Transverse colon (tissue), 4 donors: ENCODE measurements at regions of chr17 and their contacts with region 1.

Region 1: GRCh38 chr17:72556944-72557826 is 436.4 kb downstream of the SOX9 start:
- DNase-seq: peak; percentile 75
- H3K4me3 ChIP-seq: no peak overlapping the region
- H3K27ac ChIP-seq: no peak overlapping the region
- H3K4me1 ChIP-seq: peaks cover 0 to 17% (median 8%) of the 10 kb centered on the region in 4 donors
- H3K27me3 ChIP-seq: no peaks in the 10 kb centered on the region
- CTCF ChIP-seq: peak; percentile 68 to 82 (median 71)
- EP300 ChIP-seq: no peak
- POLR2A ChIP-seq: no peak

Region 2: GRCh38 chr17:72725433-72726068 is 168.4 kb after region 1 on chr17:
- in situ Hi-C with region 1: loop called in 1 of 4 experiments (anchors 10 kb)
- intact Hi-C with region 1: no loop called
- DNase-seq: peak; percentile 69
- H3K4me3 ChIP-seq: no peak overlapping the region
- H3K27ac ChIP-seq: no peak overlapping the region
- H3K4me1 ChIP-seq: peaks cover 0 to 9% (median 3%) of the 10 kb centered on the region in 4 donors
- H3K27me3 ChIP-seq: no peaks in the 10 kb centered on the region
- CTCF ChIP-seq: peak; percentile 67 to 89 (median 80)
- EP300 ChIP-seq: no peak
- POLR2A ChIP-seq: no peak

Region 3: DNA sequence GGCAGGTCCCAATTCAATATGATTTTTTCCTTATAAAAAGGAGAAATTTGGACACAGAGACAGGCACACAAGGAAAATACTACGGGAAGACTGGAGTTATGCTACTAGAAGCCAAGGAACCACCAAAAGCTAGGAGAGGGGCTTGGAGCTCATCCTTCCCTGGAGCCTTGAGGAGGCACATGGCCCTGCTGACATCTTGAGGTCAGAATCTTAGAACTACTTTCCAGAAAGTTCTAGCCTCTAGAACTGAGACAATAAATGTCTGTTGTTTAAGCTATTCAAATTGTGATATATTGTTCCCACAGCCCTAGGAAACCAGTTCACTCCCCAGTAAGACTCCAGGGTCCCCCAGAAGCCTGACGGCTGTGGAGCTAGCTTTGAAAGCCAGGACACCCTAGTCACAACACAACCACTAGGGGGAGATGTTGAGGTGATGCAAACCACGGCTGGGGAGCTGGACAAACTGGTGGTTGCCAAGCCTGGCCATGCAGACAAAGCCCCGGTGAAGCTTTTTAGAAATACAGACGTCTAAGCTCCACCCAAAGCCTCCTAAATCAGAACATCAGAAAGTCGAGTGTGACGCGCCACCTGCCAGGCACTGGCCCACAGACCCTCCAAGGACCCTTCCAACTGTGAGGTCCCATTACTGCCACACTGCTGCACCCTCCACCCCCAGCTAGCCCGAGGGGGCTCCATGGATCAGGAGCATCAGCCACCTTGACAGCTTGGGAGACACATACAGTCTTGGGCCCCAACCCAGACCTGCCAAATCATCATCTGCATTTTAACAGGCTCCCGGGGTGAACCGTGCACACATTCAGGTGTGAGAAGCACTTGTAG is 428.9 kb after region 1 on chr17:
- in situ Hi-C with region 1: loop called in 1 of 4 experiments (anchors 25 kb)
- intact Hi-C with region 1: no loop called
- DNase-seq: peak; percentile 57
- H3K4me3 ChIP-seq: no peak overlapping the region
- H3K27ac ChIP-seq: no peak overlapping the region
- H3K4me1 ChIP-seq: no peaks in the 10 kb centered on the region
- H3K27me3 ChIP-seq: no peaks in the 10 kb centered on the region
- CTCF ChIP-seq: peak; percentile 57 to 84 (median 74)
- EP300 ChIP-seq: no peak
- POLR2A ChIP-seq: no peak

Region 4: GRCh38 chr17:73192894-73193701 is 635.9 kb after region 1 on chr17 and contains the start of gene COG1:
- in situ Hi-C with region 1: loop called in 3 of 4 experiments (anchors 25 kb)
- intact Hi-C with region 1: no loop called
- DNase-seq: peak; percentile 92
- H3K4me3 ChIP-seq: peak within 1 kb of the TSS; percentile 81 to 99 (median 90)
- H3K27ac ChIP-seq: peak within 1 kb of the TSS; percentile 91 to 95 (median 94)
- H3K4me1 ChIP-seq: peaks cover 5 to 27% (median 17%) of the 10 kb centered on the region in 4 donors
- H3K27me3 ChIP-seq: no peaks in the 10 kb centered on the region
- CTCF ChIP-seq: no peak
- EP300 ChIP-seq: no peak
- POLR2A ChIP-seq: peak; percentile 72
- total RNA-seq, gene COG1: 54.2 to 126 (median 69.1) TPM